Mammary epithelial cell (primary cell): ENCODE measurements at regions of chr4 and their contacts with region 1.

Region 1: DNA sequence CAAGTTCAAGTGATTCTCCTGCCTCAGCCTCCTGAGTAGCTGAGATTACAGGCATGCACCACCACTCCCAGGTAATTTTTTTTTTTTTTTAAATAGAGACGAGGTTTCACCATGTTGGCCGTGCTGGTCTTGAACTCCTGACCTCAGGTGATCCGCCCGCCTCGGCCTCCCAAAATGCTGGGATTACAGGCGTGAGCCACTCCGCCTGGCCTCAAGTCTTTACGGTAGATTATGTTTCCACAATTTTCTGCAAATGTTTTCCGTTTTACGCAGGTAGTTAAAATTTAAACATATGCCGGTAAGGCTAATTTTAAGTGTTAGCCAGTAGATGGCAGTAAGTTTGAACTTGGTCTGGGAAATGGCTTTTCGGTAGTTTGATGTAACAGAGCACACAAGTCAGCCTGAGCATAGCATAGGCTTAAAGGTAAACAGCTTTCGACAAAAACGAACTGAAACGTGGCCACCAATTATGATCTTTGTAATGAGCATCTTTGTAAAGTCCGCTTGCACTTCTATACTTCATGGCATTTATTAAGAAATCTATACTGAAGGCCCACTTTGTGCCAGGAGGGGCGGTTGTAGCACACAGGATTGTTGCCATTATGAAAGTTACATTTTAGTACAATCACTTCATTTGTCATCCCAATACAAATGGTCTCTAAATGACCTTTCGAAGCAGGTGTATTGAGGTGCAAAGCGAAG is 31.1 kb downstream of the CCKAR start:
- DNase-seq: peak; percentile 44
- H3K4me3 ChIP-seq: no peak overlapping the region
- H3K27ac ChIP-seq: no peak overlapping the region
- H3K4me1 ChIP-seq: no peaks in the 10 kb centered on the region
- H3K27me3 ChIP-seq: no peaks in the 10 kb centered on the region
- CTCF ChIP-seq: peak; percentile 62 to 69

Region 2: DNA sequence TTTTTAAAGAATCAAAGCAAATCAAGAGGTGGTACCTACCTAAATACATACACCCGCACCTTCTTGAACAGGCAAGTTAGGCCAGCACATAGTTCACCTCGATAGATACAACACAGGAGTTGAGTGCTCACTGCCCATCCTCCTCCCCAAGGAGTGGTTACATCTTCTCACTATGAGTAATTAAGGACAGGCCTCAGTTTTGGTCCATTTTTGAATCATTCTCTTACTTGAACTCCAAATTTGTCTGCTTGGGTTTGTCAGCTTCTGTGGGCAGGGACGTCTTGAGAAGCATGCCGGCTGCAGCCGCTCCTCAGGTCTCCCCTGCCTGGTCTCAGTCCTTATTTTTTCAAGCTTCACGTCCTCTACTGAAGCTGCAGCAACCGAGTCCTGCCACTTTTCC is 329.0 kb before region 1 on chr4:
- CTCF ChIA-PET with region 1: no interaction called
- dilution Hi-C with region 1: no loop called
- in situ Hi-C with region 1: no loop called
- intact Hi-C with region 1: no loop called
- DNase-seq: no peak
- H3K4me3 ChIP-seq: no peak overlapping the region
- H3K27ac ChIP-seq: no peak overlapping the region
- H3K4me1 ChIP-seq: peaks cover 15% of the 10 kb centered on the region
- H3K27me3 ChIP-seq: no peaks in the 10 kb centered on the region
- CTCF ChIP-seq: no peak

Region 3: GRCh38 chr4:26372525-26373172 is 86.6 kb before region 1 on chr4:
- CTCF ChIA-PET with region 1: no interaction called
- dilution Hi-C with region 1: no loop called
- in situ Hi-C with region 1: no loop called
- intact Hi-C with region 1: no loop called
- DNase-seq: peak; percentile 48
- H3K4me3 ChIP-seq: no peak overlapping the region
- H3K27ac ChIP-seq: no peak overlapping the region
- H3K4me1 ChIP-seq: peaks cover 22% of the 10 kb centered on the region
- H3K27me3 ChIP-seq: no peaks in the 10 kb centered on the region
- CTCF ChIP-seq: no peak

Region 4: DNA sequence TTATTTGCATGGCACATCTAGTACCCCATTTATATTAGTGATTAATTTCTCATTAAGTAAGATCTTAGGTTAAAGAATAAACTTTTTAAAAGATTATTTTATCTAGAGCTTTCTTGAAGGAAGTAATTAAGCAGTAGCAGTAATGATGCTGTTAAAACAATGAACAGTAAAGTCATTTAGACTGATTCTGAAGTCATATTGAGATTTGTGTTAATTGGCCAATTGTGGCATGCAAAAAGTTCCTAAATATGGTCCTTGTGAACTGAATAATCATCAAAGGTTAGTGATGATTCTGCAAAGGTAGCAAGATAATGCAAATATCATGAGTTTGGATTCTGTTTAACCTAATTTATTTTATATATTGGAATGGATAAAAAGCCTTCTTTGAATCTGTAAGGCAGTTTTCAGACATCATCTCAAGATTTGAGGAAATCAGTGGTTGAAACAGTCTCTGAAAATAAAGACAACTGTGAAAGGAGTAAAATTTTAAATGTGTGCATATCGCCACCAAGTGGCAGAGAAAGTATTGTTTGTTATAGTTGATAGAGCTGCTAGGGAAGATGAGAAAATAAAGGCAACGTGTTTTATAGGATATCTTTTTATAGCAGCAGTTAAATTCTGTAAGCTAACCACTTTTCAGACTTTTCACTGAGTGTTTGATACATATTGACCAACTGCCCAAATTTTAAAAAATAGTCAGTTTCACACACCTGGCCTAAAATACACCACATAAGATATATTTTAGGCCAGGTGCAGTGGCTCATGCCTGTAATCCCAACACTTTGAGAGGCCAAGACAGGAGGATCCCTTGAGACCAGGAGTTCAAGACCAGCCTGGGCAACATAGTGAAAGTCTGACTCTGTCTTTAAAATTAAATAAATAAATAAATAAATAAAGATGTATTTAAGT is 48.6 kb before region 1 on chr4:
- CTCF ChIA-PET with region 1: no interaction called
- dilution Hi-C with region 1: no loop called
- in situ Hi-C with region 1: no loop called
- intact Hi-C with region 1: no loop called
- DNase-seq: peak; percentile 42
- H3K4me3 ChIP-seq: no peak overlapping the region
- H3K27ac ChIP-seq: no peak overlapping the region
- H3K4me1 ChIP-seq: no peaks in the 10 kb centered on the region
- H3K27me3 ChIP-seq: no peaks in the 10 kb centered on the region
- CTCF ChIP-seq: peak; percentile 52 to 58

Region 5: DNA sequence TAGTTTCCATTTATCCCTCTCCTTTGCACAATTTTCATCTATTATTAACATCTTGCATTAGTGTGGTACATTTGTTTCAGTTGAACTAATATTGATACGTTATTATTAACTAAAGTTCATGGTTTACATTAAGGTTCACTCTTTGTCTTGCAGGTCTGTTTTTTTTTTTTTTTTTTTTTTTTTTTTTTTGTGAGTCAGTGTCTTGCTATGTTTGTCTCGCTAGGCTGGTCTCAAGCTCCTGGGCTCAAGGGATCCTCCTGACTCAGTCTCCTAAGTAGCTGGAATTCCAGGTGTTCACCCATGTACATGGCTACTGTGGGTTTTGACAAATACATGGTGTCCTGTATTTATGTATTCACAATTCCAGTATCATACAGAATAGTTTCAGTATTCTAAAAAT is 131.4 kb after region 1 on chr4:
- CTCF ChIA-PET with region 1: interaction called, 16 read pairs
- dilution Hi-C with region 1: no loop called
- in situ Hi-C with region 1: no loop called
- intact Hi-C with region 1: no loop called
- DNase-seq: peak; percentile 79
- H3K4me3 ChIP-seq: no peak overlapping the region
- H3K27ac ChIP-seq: no peak overlapping the region
- H3K4me1 ChIP-seq: peaks cover 8% of the 10 kb centered on the region
- H3K27me3 ChIP-seq: no peaks in the 10 kb centered on the region
- CTCF ChIP-seq: no peak